Lower lobe of right lung (tissue), 2 donors: ENCODE measurements at regions of chr12 and their contacts with region 1.

Region 1: DNA sequence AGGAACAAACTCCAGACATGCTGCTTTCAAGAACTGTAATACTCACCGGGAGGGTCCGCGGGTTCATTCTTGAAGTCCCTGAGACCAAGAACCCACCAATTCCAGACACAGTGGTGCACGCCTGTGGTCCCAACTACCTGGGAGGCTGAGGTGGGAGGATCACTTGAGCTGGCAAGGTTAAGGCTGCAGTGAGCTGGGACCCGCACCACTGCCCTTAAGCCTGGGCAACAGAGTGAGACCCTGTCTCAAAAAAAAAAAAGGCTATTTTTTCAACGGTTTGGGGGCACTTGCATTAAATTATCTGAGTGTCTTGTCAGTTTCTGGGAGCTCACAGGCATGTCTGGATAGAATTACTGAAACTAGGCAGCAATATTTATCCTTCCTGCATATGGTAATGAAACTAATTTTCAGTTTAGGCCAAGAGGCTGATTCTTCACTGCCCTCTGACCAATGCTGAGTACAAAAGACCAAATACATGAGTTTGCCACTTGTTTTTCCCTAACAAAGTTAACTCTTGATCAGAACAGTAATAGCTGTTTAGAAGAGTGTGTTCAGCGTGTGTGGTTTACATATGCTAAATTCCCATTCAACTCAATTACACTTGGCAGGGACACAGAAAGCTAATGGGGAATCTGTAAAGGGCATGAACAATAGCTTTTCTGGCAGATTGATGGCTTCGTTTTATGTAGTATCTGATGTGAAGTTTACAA is 65.8 kb upstream of the RASSF3 start:
- DNase-seq: no peak
- ATAC-seq: no peak
- H3K4me3 ChIP-seq: no peak overlapping the region
- H3K27ac ChIP-seq: no peak overlapping the region
- H3K4me1 ChIP-seq: peaks cover under 1% of the 10 kb centered on the region
- H3K27me3 ChIP-seq: no peaks in the 10 kb centered on the region
- CTCF ChIP-seq: no peak

Region 2: GRCh38 chr12:64451687-64452558 is 92.6 kb before region 1 on chr12 and contains the start of gene TBK1:
- intact Hi-C with region 1: no loop called
- DNase-seq: peak; percentile 94
- ATAC-seq: peak; percentile 97 to 98
- H3K4me3 ChIP-seq: peak within 1 kb of the TSS; percentile 92
- H3K27ac ChIP-seq: peak within 1 kb of the TSS; percentile 97
- H3K4me1 ChIP-seq: peaks cover 24% of the 10 kb centered on the region
- H3K27me3 ChIP-seq: no peaks in the 10 kb centered on the region
- CTCF ChIP-seq: no peak
- total RNA-seq, gene TBK1: 25.0 TPM

Region 3: DNA sequence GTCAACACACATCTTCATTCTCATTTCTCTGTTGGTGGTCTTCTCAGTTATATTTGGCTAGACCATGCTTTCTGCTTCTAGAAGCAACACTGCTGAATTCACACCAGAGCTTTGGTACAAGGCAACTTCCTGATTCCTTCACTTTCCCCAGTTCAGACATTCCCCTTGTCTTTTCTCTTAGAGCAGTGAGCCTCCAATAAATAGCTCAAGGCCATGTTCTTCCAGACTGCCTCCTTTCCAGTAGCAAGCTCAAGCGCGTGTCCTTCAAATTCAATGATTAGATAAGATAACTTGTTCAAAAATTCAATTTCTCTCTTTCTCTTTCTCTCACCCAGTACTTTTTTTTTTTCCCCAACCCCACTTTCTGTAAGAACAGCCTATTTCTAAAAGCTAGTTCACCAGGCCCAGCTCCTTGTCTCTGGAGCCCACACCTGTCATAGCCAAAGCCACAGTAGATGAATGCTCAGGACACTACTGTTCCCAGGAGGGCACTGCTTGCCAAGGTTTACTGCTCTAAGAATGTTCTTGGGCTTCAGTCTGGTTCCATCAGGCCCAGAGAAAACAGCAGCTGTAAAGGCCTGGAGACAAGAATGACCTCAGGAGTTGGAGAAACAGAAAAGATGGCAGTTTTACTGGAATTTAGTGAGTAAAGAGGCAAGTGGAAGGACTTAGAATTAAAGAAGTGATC is 74.9 kb before region 1 on chr12:
- intact Hi-C with region 1: no loop called
- DNase-seq: no peak
- ATAC-seq: no peak
- H3K4me3 ChIP-seq: no peak overlapping the region
- H3K27ac ChIP-seq: no peak overlapping the region
- H3K4me1 ChIP-seq: no peaks in the 10 kb centered on the region
- H3K27me3 ChIP-seq: no peaks in the 10 kb centered on the region
- CTCF ChIP-seq: no peak

Region 4: GRCh38 chr12:64696080-64696741 is 151.7 kb after region 1 on chr12:
- intact Hi-C with region 1: loop called (anchors 5 kb)
- DNase-seq: no peak
- ATAC-seq: no peak
- H3K4me3 ChIP-seq: no peak overlapping the region
- H3K27ac ChIP-seq: no peak overlapping the region
- H3K4me1 ChIP-seq: peaks cover 20% of the 10 kb centered on the region
- H3K27me3 ChIP-seq: no peaks in the 10 kb centered on the region
- CTCF ChIP-seq: peak; percentile 47